ENCODE measurements at regions of chr14 and their contacts with region 1.

Region 1: GRCh38 chr14:91177073-91178034 is 63.5 kb downstream of the DGLUCY start:
- DNase-seq: peak; percentile 81
- CTCF ChIP-seq: peak; percentile 73

Region 2: DNA sequence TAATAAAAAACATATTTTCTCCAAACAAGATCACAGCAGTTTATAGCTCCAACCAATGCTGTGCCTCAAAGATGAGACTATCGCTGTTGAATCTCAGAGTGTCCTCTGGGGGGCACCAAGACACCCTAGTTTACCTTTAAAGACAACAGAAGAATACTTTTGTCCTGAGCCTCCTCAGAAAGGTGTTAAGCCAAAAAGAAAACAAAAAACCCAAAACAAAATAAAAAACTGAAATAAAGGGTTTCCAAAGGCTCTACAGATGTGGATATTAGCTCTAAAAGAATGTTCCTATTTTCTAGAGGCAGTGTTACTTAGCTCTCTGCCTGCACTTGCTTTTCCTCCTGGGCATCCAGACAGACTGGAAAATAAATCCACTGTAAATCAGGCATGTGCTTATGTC is 274.3 kb before region 1 on chr14:
- in situ Hi-C with region 1: loop called (anchors 10 kb)
- DNase-seq: peak; percentile 71
- CTCF ChIP-seq: peak; percentile 59

Region 3: GRCh38 chr14:91286530-91286937 is 109.2 kb after region 1 on chr14:
- in situ Hi-C with region 1: loop called (anchors 5 kb)
- DNase-seq: peak; percentile 85
- CTCF ChIP-seq: peak; percentile 80

Region 4: GRCh38 chr14:91418387-91419043 is 241.2 kb after region 1 on chr14:
- in situ Hi-C with region 1: loop called (anchors 25 kb)
- DNase-seq: peak; percentile 63
- CTCF ChIP-seq: peak; percentile 94